ENCODE measurements at regions of chr17 and their contacts with region 1.

Region 1: GRCh38 chr17:2309338-2310154 is 5.8 kb downstream of the SRR start:
- DNase-seq: peak in 6 of 7 donors; percentile 30 to 70 (median 50)
- H3K4me3 ChIP-seq: no peak overlapping the region
- H3K27ac ChIP-seq: peak overlapping the region in 2 of 5 donors; percentile 17 to 21
- H3K4me1 ChIP-seq: peaks cover 0 to 10% of the 10 kb centered on the region in 2 donors
- H3K27me3 ChIP-seq: no peaks in the 10 kb centered on the region
- CTCF ChIP-seq: no peak
- POLR2A ChIP-seq: no peak

Region 2: GRCh38 chr17:2347547-2348307 is 38.2 kb after region 1 on chr17:
- intact Hi-C with region 1: loop called in 1 of 2 experiments (anchors 5 kb)
- DNase-seq: peak; percentile 41 to 89 (median 83)
- H3K4me3 ChIP-seq: no peak overlapping the region
- H3K27ac ChIP-seq: peak overlapping the region in 2 of 5 donors; percentile 43 to 45
- H3K4me1 ChIP-seq: peaks cover 0 to 15% of the 10 kb centered on the region in 2 donors
- H3K27me3 ChIP-seq: no peaks in the 10 kb centered on the region
- CTCF ChIP-seq: no peak
- POLR2A ChIP-seq: peak in 1 of 2 donors; percentile 57

Measured in adrenal gland (tissue), 19 donors.